ENCODE measurements at regions of chr15 and their contacts with region 1.

Region 1: GRCh38 chr15:56918046-56918938 is at the start of gene TCF12:
- DNase-seq: peak; percentile 93
- H3K4me3 ChIP-seq: peak within 1 kb of the TSS; percentile 91
- H3K27ac ChIP-seq: peak within 1 kb of the TSS; percentile 93
- H3K4me1 ChIP-seq: no peaks in the 10 kb centered on the region
- H3K27me3 ChIP-seq: no peaks in the 10 kb centered on the region
- CTCF ChIP-seq: no peak
- total RNA-seq, gene TCF12: 68.7 to 76.3 TPM

Region 2: GRCh38 chr15:57138349-57138788 is 220.1 kb after region 1 on chr15:
- intact Hi-C with region 1: loop called (anchors 5 kb)
- DNase-seq: no peak
- H3K4me3 ChIP-seq: no peak overlapping the region
- H3K27ac ChIP-seq: no peak overlapping the region
- H3K4me1 ChIP-seq: no peaks in the 10 kb centered on the region
- H3K27me3 ChIP-seq: no peaks in the 10 kb centered on the region
- CTCF ChIP-seq: peak; percentile 75